HCT116 (cell line): ENCODE measurements at regions of chr3 and their contacts with region 1.

Region 1: GRCh38 chr3:134212906-134213665 is 37.6 kb downstream of the RYK start:
- DNase-seq: peak; percentile 60
- ATAC-seq: peak; percentile 94
- H3K4me3 ChIP-seq: no peak overlapping the region
- H3K27ac ChIP-seq: no peak overlapping the region
- H3K4me1 ChIP-seq: no peaks in the 10 kb centered on the region
- H3K27me3 ChIP-seq: no peaks in the 10 kb centered on the region
- CTCF ChIP-seq: peak; percentile 84 to 99 (median 96)
- POLR2A ChIP-seq: no peak
- RAD21 ChIP-seq: peak; percentile 82

Region 2: DNA sequence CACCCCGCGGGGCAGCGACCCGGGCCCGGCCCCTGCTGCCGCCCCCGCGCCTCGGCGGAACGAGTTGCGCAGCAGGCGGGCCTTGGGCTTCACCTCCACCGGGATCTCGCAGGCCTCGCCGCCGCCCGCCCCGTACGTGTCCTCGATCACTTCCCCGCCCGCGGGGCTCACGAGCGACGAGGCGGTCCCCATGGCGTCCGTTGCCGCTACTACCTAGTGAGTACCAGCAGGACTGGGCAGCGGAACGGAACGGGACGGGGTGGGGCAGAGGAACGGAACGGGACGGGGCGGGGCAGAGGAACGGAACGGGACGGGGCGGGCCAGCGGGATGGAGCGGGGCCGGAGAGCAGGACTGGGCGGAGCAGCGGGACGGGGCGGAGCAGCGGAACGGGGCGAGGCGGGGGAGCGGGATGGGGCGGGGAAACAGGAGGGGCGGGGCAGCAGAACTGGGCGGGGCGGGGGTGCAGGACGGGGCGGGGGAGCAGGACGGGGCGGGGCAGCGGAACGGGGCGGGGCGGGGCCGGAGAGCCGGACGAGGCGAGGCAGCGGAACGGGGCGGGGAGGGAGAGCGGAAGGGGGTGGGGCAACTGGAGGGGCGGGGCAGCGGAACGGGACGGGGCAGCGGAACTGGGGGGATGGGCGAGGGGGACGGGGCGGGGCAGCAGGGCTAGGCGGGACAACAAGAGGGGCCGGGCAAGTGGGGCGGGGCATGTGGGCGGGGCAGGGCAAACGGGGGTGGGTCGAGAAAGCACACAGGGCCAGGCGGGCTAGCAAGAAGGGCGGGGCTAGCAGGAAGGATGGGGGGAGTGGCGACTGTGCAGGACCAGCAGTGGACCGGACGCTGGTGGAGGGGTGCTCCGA is 1490.7 kb before region 1 on chr3 and contains the start of gene NPHP3:
- CTCF ChIA-PET with region 1: no interaction called
- POLR2A ChIA-PET with region 1: no interaction called
- RAD21 ChIA-PET with region 1: no interaction called
- intact Hi-C with region 1: loop called (anchors 10 kb)
- DNase-seq: peak; percentile 86
- ATAC-seq: peak; percentile 89
- H3K4me3 ChIP-seq: peak within 1 kb of the TSS; percentile 78 to 79
- H3K27ac ChIP-seq: peak within 1 kb of the TSS; percentile 59
- H3K4me1 ChIP-seq: peaks cover 7 to 21% of the 10 kb centered on the region in 2 experiments; a peak in 3 of 4 replicates
- H3K27me3 ChIP-seq: no peaks in the 10 kb centered on the region
- CTCF ChIP-seq: 0 out of 6 replicates have a peak, but pooled peaks of 1 of the 3 experiments have one; percentile 3
- POLR2A ChIP-seq: peak; percentile 52
- RAD21 ChIP-seq: no peak
- total RNA-seq, gene NPHP3: 15.5 TPM

Region 3: GRCh38 chr3:134197681-134198261 is 15.3 kb before region 1 on chr3:
- CTCF ChIA-PET with region 1: interaction called, 44 read pairs
- POLR2A ChIA-PET with region 1: interaction called, 6 read pairs
- RAD21 ChIA-PET with region 1: interaction called in 1 of 2 experiments, 4 read pairs
- intact Hi-C with region 1: no loop called
- DNase-seq: peak; percentile 39
- ATAC-seq: peak; percentile 56
- H3K4me3 ChIP-seq: no peak overlapping the region
- H3K27ac ChIP-seq: no peak overlapping the region
- H3K4me1 ChIP-seq: peaks cover 19 to 24% of the 10 kb centered on the region in 2 experiments
- H3K27me3 ChIP-seq: no peaks in the 10 kb centered on the region
- CTCF ChIP-seq: peak; percentile 65 to 80 (median 78)
- POLR2A ChIP-seq: no peak
- RAD21 ChIP-seq: peak; percentile 75

Region 4: DNA sequence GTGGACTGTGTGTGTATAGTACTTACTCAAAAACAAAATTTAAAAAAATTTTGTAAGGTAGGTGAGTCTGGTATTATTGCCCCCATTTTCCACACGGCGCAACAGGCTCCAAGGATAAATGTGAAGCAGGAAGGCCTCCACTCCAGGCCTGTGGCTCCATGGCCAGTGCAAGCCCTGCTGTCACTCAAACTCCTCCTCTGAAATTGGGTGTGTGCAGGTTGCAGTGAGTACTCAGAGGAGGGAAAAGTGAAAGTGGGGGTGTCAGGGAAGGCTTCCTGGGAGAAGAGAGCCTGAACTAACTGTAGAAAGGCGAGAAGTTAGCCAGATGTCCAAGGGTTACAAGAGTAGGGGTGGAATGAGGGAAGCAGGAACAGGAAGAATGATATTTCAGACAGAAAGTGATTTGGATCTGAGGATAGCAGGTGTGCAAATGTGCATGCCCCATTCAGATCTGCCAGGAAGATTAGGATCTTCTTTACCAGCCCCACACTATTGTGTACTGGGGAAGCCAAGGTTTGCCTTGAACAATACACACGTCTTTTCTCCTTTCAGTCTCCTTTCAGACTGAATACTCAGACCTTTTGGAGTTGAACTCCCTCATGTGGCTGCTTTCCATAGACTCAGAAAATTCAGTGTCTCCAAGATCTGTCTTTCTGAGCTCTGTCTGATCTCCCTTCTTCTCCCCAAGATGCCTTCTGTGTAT is 86.2 kb after region 1 on chr3:
- CTCF ChIA-PET with region 1: interaction called, 6 read pairs
- POLR2A ChIA-PET with region 1: no interaction called
- RAD21 ChIA-PET with region 1: no interaction called
- intact Hi-C with region 1: loop called (anchors 5 kb)
- DNase-seq: no peak
- ATAC-seq: peak; percentile 47
- H3K4me3 ChIP-seq: no peak overlapping the region
- H3K27ac ChIP-seq: no peak overlapping the region
- H3K4me1 ChIP-seq: no peaks in the 10 kb centered on the region
- H3K27me3 ChIP-seq: no peaks in the 10 kb centered on the region
- CTCF ChIP-seq: peak in 1 of 3 experiments; percentile 29; a peak in 1 of 6 replicates
- POLR2A ChIP-seq: no peak
- RAD21 ChIP-seq: peak; percentile 62

Region 5: GRCh38 chr3:134473868-134474546 is 260.9 kb after region 1 on chr3:
- CTCF ChIA-PET with region 1: interaction called, 8 read pairs
- POLR2A ChIA-PET with region 1: no interaction called
- RAD21 ChIA-PET with region 1: no interaction called
- intact Hi-C with region 1: loop called (anchors 2 kb)
- DNase-seq: peak; percentile 51
- ATAC-seq: peak; percentile 89
- H3K4me3 ChIP-seq: no peak overlapping the region
- H3K27ac ChIP-seq: no peak overlapping the region
- H3K4me1 ChIP-seq: peaks cover 3 to 16% of the 10 kb centered on the region in 2 experiments; a peak in 3 of 4 replicates
- H3K27me3 ChIP-seq: no peaks in the 10 kb centered on the region
- CTCF ChIP-seq: peak; percentile 66 to 87 (median 80)
- POLR2A ChIP-seq: no peak
- RAD21 ChIP-seq: peak; percentile 95